Gastrocnemius medialis (tissue), 4 donors: ENCODE measurements at regions of chr12 and their contacts with region 1.

Region 1: DNA sequence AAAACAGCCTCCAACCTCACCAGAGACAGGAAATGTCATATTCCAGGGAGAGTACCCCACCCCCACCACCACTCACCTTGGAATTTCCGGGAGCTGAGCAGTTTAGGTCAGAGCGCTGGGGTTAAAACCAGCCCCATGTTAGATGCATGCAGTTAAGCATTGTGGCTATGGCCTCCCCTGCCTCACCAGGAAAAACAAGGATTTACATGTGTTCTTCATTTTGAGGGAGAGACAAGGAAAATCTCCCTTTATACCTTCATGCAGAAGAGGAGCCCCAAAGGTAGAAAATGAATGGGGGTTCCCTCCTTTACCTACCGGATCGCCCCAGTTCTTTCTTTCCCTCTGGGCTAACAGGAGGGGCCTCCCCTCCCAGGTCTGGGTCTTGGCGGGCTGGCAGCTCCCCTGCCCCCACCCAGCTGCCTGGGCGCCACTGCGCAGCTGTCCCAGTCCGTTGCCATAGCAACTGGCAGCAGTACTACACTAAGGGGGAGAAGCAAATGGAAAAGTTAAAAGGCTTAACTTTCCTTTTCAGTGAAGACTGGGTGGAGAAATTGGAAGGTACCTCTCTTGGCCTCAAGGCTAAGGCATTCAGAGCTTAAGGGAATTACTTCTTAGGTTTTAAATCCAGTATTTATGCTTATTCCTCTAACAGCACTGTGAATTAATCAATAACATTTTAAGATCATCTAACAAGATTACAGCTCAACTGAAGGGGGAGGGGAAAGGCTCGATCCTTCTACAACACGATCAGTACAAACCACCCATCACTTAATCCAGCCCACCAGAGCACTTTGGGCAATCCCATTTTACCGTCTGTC is 20.5 kb downstream of the CBX5 start:
- DNase-seq: peak; percentile 41 to 52
- ATAC-seq: peak; percentile 60 to 67
- H3K4me3 ChIP-seq: peak overlapping the region; percentile 27 to 56 (median 44)
- H3K27ac ChIP-seq: peak overlapping the region; percentile 27 to 57 (median 48)
- H3K4me1 ChIP-seq: peaks cover 31 to 34% of the 10 kb centered on the region in 2 donors
- H3K27me3 ChIP-seq: no peaks in the 10 kb centered on the region
- CTCF ChIP-seq: no peak
- POLR2A ChIP-seq: no peak

Region 2: DNA sequence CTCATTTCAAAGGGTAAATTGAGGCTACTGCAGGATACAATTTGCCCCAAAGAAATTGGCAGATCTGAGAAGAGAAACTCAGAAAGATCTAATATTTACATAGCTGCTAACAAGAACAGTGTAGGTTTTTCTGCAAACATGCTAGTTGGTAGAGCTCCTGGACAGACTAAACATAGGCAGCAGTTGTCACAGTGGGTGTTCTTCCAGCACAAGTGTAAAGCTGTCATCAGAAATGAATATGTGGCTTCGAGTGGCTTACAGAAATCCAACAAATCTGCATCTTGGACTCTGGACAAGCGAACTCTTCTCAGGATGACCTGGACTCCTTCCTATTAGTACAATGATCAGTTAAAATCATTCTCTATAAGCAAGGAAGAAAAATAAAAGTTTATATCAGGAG is 14.6 kb after region 1 on chr12:
- in situ Hi-C with region 1: no loop called
- intact Hi-C with region 1: loop called (anchors 2 kb)
- DNase-seq: no peak
- ATAC-seq: peak; percentile 80 to 81
- H3K4me3 ChIP-seq: no peak overlapping the region
- H3K27ac ChIP-seq: peak overlapping the region; percentile 47 to 71 (median 58)
- H3K4me1 ChIP-seq: peaks cover 37 to 44% of the 10 kb centered on the region in 2 donors
- H3K27me3 ChIP-seq: no peaks in the 10 kb centered on the region
- CTCF ChIP-seq: no peak
- POLR2A ChIP-seq: no peak